BJ (cell line): ENCODE measurements at regions of chr11 and their contacts with region 1.

Region 1: DNA sequence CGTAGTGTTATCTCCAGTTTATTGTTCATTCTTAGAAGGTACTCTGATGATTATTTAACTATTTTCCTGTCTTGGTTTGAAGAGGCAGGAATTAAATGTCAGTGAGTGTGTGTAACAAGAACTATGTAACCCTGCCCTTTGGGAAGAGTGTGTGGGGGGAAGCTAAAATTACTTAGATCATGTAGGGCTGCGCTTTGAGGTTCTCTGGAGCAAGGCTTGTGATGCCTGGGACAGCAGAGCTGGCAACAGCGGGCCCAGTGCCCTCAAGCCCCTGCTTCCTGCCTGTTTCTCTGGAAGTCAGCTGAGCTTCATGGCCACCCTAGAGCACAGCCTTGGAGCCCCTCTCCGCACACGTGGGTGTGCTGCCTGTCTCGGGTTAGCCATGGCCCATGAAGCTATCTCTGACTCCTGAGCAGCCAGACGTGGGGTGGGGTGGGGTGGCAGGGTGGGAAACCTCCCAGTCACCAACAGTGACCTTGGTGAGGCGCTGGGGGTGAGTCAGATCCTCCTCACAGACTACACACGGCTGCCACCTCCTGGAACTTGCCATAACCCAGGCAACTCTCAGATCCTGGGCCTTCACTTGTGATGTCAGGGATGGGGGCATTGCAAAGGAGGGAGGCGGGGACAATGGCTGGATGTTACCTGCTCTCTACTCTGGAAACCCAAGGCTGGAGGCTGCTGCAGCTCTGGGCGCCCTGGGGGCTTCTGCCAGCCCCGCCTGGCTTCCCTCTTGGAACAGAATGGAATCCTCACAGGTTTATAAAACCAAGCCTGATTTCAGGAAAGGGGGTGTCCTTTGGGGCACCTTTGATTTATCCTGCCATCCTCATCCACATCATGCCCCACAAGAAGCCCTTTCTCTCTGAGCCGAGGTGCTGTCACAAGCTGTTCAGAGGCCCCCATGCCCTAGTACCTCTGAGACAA is 88.6 kb downstream of the SNX19 start:
- DNase-seq: no peak
- H3K4me3 ChIP-seq: no peak overlapping the region
- H3K27me3 ChIP-seq: peaks cover 2% of the 10 kb centered on the region; the same call in 1 of the 2 replicates
- CTCF ChIP-seq: peak; percentile 82

Region 2: GRCh38 chr11:130442737-130443136 is 385.0 kb before region 1 on chr11:
- CTCF ChIA-PET with region 1: interaction called, 58 read pairs
- POLR2A ChIA-PET with region 1: no interaction called
- DNase-seq: no peak
- H3K4me3 ChIP-seq: no peak overlapping the region
- H3K27me3 ChIP-seq: no peaks in the 10 kb centered on the region
- CTCF ChIP-seq: no peak

Region 3: GRCh38 chr11:130772266-130773227 is 55.2 kb before region 1 on chr11:
- CTCF ChIA-PET with region 1: interaction called, 10 read pairs
- POLR2A ChIA-PET with region 1: no interaction called
- DNase-seq: peak; percentile 83
- H3K4me3 ChIP-seq: no peak overlapping the region
- H3K27me3 ChIP-seq: no peaks in the 10 kb centered on the region
- CTCF ChIP-seq: no peak

Region 4: DNA sequence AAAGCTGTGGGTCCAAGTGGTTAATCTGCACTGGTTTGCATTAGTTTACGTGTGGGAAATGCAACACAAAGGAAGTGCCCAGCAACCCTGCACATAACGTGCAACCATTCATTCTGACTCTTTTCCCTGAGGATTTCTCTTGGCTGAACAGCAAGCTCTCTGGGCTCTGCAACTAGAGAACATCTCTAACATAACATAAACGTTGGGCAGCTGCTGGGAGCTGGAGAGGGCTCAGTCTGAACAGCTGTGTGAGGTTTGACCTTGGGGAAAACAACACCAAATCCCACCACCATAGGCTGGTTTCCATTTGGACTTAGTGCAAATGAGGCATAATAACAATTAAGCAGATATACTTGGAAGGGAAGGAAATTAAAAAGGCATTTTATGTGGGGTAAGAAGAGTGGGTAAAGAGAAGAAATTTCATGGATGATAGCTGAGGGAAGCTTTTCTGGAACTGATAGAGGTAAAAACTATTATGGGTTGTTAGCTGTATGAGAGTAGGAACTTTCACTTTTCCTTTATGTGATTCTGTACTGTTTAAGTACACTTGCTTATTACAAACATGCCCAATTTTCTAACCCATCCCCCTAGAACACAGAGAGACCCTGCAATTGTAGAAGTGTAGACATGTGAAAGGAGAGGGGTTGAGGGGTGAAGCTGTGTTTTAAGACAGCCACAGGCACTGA is 12.4 kb after region 1 on chr11:
- CTCF ChIA-PET with region 1: interaction called, 11 read pairs
- POLR2A ChIA-PET with region 1: no interaction called
- DNase-seq: no peak
- H3K4me3 ChIP-seq: no peak overlapping the region
- H3K27me3 ChIP-seq: no peaks in the 10 kb centered on the region
- CTCF ChIP-seq: no peak

Region 5: GRCh38 chr11:130979386-130979972 is 151.8 kb after region 1 on chr11:
- CTCF ChIA-PET with region 1: no interaction called
- POLR2A ChIA-PET with region 1: no interaction called
- DNase-seq: no peak
- H3K4me3 ChIP-seq: no peak overlapping the region
- H3K27me3 ChIP-seq: peaks cover 5% of the 10 kb centered on the region; the same call in 1 of the 2 replicates
- CTCF ChIP-seq: peak; percentile 60